ENCODE measurements at regions of chr4 and their contacts with region 1.

Region 1: GRCh38 chr4:38062088-38062893 is 102.1 kb downstream of the PTTG2 start:
- DNase-seq: no peak
- H3K4me3 ChIP-seq: peak overlapping the region; percentile 22 to 60 (median 43)
- H3K27ac ChIP-seq: peak overlapping the region; percentile 65 to 76 (median 72)
- H3K4me1 ChIP-seq: peaks cover 4 to 10% (median 6%) of the 10 kb centered on the region in 3 donors
- H3K27me3 ChIP-seq: no peaks in the 10 kb centered on the region
- CTCF ChIP-seq: peak; percentile 57 to 87 (median 78)
- POLR2A ChIP-seq: no peak

Region 2: DNA sequence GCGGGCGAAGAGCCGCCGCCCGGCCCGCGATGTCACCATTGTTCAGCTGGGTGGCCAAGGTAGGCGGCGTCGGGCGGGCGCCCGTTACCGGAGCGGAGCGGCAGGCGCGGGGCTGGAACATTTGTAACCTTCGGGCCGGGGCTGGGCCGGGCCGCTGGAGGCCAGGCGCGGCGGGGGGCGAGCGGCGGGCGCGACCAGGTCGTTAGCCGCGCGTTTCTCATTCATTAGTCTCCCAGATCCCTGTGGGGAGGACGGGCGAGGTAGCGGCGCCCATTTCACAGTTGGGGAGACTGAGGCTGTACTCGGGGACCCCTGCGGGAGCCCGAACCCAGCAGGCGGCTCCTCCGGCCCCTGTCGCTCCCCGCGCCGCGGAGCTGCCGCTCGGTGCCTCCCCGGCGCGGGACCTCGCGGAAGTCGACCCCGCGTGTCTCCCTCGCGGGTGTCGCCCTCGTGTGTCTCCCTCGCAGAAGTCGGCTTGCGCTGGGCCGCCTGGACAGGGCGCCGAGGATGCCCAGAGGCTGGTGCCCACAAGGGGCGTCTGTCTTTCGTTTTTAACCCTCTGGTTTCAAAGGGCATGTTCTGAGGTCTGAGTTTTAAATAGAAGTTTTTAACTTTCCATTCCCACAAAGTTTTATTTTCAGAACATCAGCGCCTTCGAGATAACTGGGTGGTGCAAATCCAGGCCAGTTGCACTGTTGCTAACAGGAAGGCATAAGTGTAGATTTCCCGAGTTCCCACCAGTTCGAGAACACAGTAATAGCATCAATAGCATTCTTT is 84.6 kb before region 1 on chr4:
- intact Hi-C with region 1: no loop called
- DNase-seq: peak; percentile 4
- H3K4me3 ChIP-seq: peak overlapping the region; percentile 62 to 85 (median 70)
- H3K27ac ChIP-seq: peak overlapping the region; percentile 86 to 96 (median 90)
- H3K4me1 ChIP-seq: peaks cover 0 to 41% (median 6%) of the 10 kb centered on the region in 3 donors
- H3K27me3 ChIP-seq: no peaks in the 10 kb centered on the region
- CTCF ChIP-seq: peak; percentile 26 to 72 (median 52)
- POLR2A ChIP-seq: peak in 2 of 4 donors; percentile 12 to 22

Region 3: GRCh38 chr4:38730830-38731646 is 668.7 kb after region 1 on chr4:
- intact Hi-C with region 1: loop called (anchors 10 kb)
- DNase-seq: peak; percentile 25
- H3K4me3 ChIP-seq: no peak overlapping the region
- H3K27ac ChIP-seq: no peak overlapping the region
- H3K4me1 ChIP-seq: peaks cover 8 to 50% (median 12%) of the 10 kb centered on the region in 3 donors
- H3K27me3 ChIP-seq: no peaks in the 10 kb centered on the region
- CTCF ChIP-seq: peak; percentile 88 to 98 (median 94)
- POLR2A ChIP-seq: no peak